Activated CD4-positive, alpha-beta memory T cell treated with anti-CD3 and anti-CD28 coated beads for 36 hours (primary cell): ENCODE measurements at regions of chr16 and their contacts with region 1.

Region 1: DNA sequence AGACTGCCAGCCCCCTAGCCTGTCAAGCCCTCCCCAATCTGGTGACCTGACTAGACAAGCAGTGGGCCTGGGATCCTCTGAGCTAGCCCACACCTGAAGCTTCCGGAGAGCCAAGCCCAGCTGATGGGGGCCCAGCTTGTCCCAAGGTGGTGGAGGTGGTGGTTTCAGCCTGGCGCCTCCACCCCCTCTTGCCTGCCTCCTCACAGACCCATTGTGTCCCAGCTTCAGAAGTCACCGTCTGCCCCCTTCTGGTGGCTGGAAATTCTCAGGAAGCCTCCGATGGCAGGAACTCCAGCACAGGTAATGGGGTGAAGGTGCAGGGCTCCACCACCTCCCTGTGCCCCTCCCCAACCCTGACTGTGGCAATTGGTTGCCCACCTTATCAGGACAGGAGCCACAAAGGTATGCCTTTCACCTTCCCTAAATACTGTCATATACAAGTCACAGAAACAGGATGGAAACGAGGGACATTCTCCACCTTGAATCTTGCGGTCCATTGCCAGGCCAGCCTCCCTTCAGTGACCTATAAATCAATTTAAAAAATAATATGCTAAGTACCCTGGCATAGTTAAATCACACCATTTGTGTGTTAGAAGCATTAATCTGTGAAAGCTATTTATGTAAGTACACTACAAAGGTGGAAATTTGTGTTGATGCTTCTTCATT is 66.0 kb upstream of the ZNF423 start:
- DNase-seq: peak; percentile 55
- H3K4me3 Mint-ChIP-seq: no peak overlapping the region
- H3K27ac Mint-ChIP-seq: no peak overlapping the region
- H3K4me1 Mint-ChIP-seq: no peaks in the 10 kb centered on the region
- H3K27me3 Mint-ChIP-seq: peaks cover 11% of the 10 kb centered on the region

Region 2: DNA sequence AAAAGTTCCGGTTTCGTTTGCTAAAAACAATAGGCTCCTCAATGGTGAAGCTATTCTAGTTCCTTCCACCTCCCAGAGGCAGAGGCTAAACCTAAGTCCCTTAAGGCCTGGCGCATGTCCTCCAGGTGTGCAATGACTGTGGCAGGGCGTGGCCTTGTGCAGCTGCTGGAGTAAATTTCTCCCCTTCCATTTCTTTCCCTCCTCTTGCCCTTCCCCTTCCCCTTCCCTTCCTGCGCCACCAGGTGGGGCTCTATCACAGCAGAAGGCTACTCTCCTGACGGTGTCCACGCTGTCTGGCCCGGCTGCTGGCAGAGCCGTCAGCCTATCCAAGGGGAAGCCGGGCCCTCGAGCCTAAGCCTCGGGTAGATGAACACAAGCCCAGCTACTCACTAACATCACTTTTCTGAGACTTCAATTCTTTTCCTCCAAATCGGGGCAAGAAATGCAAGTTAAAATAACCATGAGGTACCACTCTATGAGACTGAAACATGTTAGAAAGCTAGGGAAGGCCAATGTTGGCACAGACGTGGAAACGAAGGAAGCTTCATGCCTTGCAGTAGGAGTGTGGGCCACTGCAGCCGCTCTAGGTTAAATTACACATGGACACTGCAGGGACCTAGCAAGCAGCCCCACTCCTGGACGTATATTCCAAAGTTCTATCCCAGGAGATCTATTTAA is 513.9 kb before region 1 on chr16:
- CTCF ChIA-PET with region 1: interaction called, 10 read pairs
- POLR2A ChIA-PET with region 1: no interaction called
- intact Hi-C with region 1: no loop called
- DNase-seq: peak; percentile 79
- H3K4me3 Mint-ChIP-seq: no peak overlapping the region
- H3K27ac Mint-ChIP-seq: no peak overlapping the region
- H3K4me1 Mint-ChIP-seq: peaks cover 2% of the 10 kb centered on the region
- H3K27me3 Mint-ChIP-seq: peaks cover 5% of the 10 kb centered on the region

Region 3: DNA sequence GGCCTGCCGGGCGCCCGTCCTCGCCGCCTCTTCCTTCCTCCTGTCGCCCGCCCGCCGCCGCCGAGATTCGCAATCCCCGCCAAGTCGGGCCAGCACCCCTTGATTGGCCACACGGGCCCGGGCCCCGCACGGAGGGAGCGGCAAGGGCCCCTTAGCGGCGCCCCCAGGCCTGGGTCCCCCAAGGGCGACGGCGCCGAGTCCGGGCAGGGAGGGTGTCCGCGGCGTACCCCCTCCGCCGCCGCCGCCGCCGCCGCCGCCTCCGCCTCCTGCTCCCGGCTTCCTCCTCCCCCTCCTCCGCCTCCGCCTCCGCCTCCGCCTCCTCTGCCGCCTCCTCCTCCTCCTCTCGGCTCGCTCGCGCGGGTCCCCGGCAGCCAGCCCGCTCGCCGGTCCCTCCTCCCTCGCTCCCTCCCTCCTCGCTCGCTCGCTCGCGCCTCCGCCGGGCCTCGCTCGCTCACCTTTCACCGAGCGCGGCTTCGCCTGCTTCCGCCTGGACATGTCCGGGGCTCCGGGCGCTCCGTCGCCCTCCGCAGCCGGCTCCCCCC is 66.6 kb before region 1 on chr16:
- CTCF ChIA-PET with region 1: interaction called, 11 read pairs
- POLR2A ChIA-PET with region 1: no interaction called
- intact Hi-C with region 1: loop called (anchors 2 kb)
- DNase-seq: peak; percentile 55
- H3K4me3 Mint-ChIP-seq: peak overlapping the region; percentile 35
- H3K27ac Mint-ChIP-seq: no peak overlapping the region
- H3K4me1 Mint-ChIP-seq: peaks cover 15% of the 10 kb centered on the region
- H3K27me3 Mint-ChIP-seq: peaks cover 38% of the 10 kb centered on the region